IMR-90 (cell line): ENCODE measurements at regions of chr3 and their contacts with region 1.

Region 1: GRCh38 chr3:160754855-160755747 is 930 bp upstream of the PPM1L start:
- DNase-seq: peak; percentile 88
- ATAC-seq: peak; percentile 93
- H3K4me3 ChIP-seq: peak overlapping the region; percentile 61
- H3K27ac ChIP-seq: peak overlapping the region; percentile 48
- H3K4me1 ChIP-seq: no peaks in the 10 kb centered on the region
- H3K27me3 ChIP-seq: peaks cover 12% of the 10 kb centered on the region
- CTCF ChIP-seq: no peak
- POLR2A ChIP-seq: peak; percentile 49; the same call in 1 of the 2 replicates
- RAD21 ChIP-seq: no peak

Region 2: DNA sequence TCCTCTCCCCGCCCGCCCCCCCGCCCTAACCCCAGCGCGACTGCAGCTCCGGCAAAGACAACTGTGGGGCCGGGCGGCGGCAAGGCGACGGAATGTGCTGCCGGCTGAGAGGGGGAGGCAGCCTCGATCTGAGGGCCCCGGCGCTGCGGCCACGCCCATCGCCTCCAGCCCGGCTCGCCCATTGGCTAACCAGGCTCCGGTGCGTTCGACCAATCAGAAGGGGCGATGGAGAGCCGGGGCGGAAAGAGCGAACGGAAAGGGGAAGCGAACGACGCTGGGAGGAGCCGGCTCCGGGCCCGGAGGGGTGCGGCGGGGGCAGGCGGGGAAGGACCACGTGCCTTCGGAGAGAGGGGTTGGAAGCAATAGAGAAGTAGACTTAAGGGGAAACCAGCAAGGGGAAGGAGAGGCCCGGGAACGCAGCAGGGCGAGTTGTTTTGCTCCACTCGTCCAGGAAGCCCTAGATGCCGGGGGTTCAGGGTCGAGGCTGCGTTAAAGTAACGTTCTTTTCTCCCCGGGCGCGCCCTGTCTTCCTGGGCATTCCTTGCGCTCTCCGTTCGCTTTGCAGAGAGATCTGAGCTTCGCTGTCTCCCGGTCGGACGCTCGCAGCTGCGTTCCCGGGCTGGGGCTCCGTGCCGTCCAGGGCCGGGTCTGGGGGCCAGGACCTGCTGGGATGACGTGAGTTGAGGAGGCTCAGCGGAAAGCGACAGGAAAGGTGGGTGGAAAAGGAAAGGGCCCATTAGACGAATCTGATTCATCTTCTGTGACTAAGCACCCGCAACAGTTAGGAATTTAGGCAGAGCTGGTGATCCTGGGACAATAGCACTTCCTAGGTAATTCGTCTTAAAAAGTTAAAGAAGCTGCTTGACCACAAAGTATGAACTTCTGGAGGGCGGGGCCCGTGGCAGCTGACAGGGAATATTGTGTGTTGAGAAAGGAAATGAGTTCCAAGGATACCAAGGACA is 189.4 kb before region 1 on chr3 and contains the start of gene KPNA4:
- CTCF ChIA-PET with region 1: no interaction called
- POLR2A ChIA-PET with region 1: no interaction called
- dilution Hi-C with region 1: no loop called
- in situ Hi-C with region 1: no loop called
- intact Hi-C with region 1: loop called (anchors 5 kb)
- DNase-seq: peak; percentile 96
- ATAC-seq: peak; percentile 91
- H3K4me3 ChIP-seq: peak within 1 kb of the TSS; percentile 75
- H3K27ac ChIP-seq: peak within 1 kb of the TSS; percentile 95
- H3K4me1 ChIP-seq: no peaks in the 10 kb centered on the region
- H3K27me3 ChIP-seq: no peaks in the 10 kb centered on the region
- CTCF ChIP-seq: no peak
- POLR2A ChIP-seq: peak; percentile 93
- RAD21 ChIP-seq: no peak
- total RNA-seq, gene KPNA4: 46.1 and 57.8 TPM in 2 replicates

Region 3: GRCh38 chr3:160739079-160739478 is 16.0 kb before region 1 on chr3:
- CTCF ChIA-PET with region 1: no interaction called
- POLR2A ChIA-PET with region 1: no interaction called
- dilution Hi-C with region 1: no loop called
- in situ Hi-C with region 1: no loop called
- intact Hi-C with region 1: no loop called
- DNase-seq: no peak
- ATAC-seq: no peak
- H3K4me3 ChIP-seq: no peak overlapping the region
- H3K27ac ChIP-seq: no peak overlapping the region
- H3K4me1 ChIP-seq: no peaks in the 10 kb centered on the region
- H3K27me3 ChIP-seq: peaks cover 2% of the 10 kb centered on the region; the same call in 1 of the 2 replicates
- CTCF ChIP-seq: no peak
- POLR2A ChIP-seq: no peak
- RAD21 ChIP-seq: no peak